ENCODE measurements at regions of chr9 and their contacts with region 1.

Region 1: DNA sequence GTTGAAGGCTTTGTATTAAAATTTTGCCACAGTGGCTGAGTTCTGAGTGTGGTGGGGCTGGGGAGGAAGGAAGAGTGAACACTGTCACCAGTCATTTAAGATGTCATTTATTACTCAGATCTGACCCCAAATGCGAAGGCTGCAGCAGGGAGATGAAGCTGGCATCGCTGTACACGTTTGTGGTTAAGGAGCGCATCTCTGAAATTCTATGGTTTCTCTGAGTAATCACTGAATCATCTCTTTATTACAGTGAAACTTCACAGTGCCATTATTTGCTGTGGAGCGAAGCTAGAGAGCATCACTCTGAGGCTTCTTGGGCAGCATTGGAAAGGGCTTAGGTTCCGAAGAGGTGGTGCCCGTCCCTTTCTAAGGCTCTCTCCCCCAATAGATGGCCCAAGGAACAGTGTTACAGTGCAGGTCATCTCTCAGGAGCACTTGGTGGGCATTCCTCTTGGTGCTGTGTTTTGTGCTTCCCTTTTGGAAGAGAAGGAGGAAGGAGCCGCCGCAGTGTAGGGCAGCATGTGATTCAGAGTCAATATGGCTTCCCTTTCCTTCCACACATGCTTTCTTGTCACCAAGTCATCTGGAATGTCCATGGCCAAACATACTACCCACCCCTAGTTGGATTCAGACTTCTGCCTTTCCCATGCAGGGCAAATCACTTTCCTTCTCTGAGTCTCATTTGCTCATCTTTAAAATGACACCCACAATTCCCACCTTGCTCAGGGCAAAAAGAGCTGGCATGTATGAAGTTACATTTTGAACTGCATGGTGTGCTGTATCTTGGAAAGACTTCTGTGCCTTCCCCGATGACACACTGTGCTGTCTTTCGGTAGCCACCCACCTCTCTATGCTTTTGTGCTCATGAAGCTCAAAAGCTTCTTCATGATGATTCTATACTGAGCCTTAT is 9.3 kb upstream of the TEX48 start:
- DNase-seq: peak; percentile 57
- ATAC-seq: peak; percentile 93
- H3K4me3 Mint-ChIP-seq: peak overlapping the region; percentile 38
- H3K27ac Mint-ChIP-seq: peak overlapping the region; percentile 99
- H3K4me1 Mint-ChIP-seq: peaks cover 82% of the 10 kb centered on the region
- H3K27me3 Mint-ChIP-seq: no peaks in the 10 kb centered on the region

Region 2: GRCh38 chr9:114619191-114619761 is 72.0 kb before region 1 on chr9:
- POLR2A ChIA-PET with region 1: no interaction called
- DNase-seq: no peak
- ATAC-seq: no peak
- H3K4me3 Mint-ChIP-seq: peak overlapping the region; percentile 69
- H3K27ac Mint-ChIP-seq: peak overlapping the region; percentile 84
- H3K4me1 Mint-ChIP-seq: peaks cover 30% of the 10 kb centered on the region
- H3K27me3 Mint-ChIP-seq: no peaks in the 10 kb centered on the region

Region 3: DNA sequence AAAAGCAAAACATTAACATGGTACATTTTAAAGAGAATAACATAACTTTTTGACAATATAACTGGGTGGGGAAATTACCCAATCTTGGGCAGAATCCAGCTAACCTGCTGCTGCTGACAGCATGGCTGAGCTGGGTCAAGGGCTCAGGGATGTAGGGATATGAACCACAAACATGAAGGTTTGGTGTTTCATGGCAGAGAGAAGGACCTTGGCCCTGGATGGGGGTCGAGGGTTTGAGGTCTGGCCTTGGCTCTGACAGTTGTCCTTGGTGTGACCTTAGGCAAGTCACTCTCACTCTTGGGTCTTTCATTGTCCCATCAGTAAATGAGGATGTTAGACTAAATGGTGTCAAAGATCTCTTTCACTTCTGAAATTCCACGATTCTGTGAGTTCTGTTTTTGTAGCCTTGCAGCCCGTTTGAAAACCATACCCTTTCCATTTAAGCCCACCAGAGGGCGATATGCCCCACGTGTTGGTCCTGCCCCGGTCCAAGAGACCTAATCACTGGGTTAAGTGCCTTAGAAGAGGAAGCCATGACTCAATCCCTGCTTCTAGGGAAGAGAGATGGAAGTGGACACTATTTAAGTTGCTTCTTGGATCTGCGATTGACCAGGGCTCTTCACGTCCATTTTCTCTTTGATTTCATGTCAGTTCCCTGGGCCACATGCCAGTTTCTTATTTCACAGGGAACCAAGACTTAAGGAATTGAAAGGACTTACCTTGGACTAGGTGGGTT is 47.4 kb after region 1 on chr9:
- POLR2A ChIA-PET with region 1: interaction called, 12 read pairs
- DNase-seq: peak; percentile 55
- ATAC-seq: peak; percentile 84
- H3K4me3 Mint-ChIP-seq: peak overlapping the region; percentile 7
- H3K27ac Mint-ChIP-seq: peak overlapping the region; percentile 79
- H3K4me1 Mint-ChIP-seq: peaks cover 54% of the 10 kb centered on the region
- H3K27me3 Mint-ChIP-seq: no peaks in the 10 kb centered on the region

Region 4: GRCh38 chr9:114898741-114899140 is 207.4 kb after region 1 on chr9:
- POLR2A ChIA-PET with region 1: interaction called, 12 read pairs
- DNase-seq: peak; percentile 79
- ATAC-seq: peak; percentile 91
- H3K4me3 Mint-ChIP-seq: no peak overlapping the region
- H3K27ac Mint-ChIP-seq: no peak overlapping the region
- H3K4me1 Mint-ChIP-seq: peaks cover 46% of the 10 kb centered on the region
- H3K27me3 Mint-ChIP-seq: no peaks in the 10 kb centered on the region

Measured in activated naive CD8-positive, alpha-beta T cell treated with anti-CD3 and anti-CD28 coated beads, Interleukin-2, amount 10 ng/mL, durations not matched to agents 7 days and 5 days (primary cell).